Heart right ventricle (tissue), 16 donors: ENCODE measurements at regions of chr7 and their contacts with region 1.

Region 1: GRCh38 chr7:80318081-80318480 is 183.4 kb downstream of the GNAI1 start:
- DNase-seq: no peak
- ATAC-seq: no peak
- H3K4me3 ChIP-seq: no peak overlapping the region
- H3K27ac ChIP-seq: no peak overlapping the region
- H3K4me1 ChIP-seq: no peaks in the 10 kb centered on the region
- H3K27me3 ChIP-seq: no peaks in the 10 kb centered on the region
- CTCF ChIP-seq: no peak

Region 2: GRCh38 chr7:80288175-80289122 is 29.6 kb before region 1 on chr7:
- intact Hi-C with region 1: no loop called
- DNase-seq: no peak
- ATAC-seq: no peak
- H3K4me3 ChIP-seq: no peak overlapping the region
- H3K27ac ChIP-seq: no peak overlapping the region
- H3K4me1 ChIP-seq: peaks cover 0 to 8% (median 0%) of the 10 kb centered on the region in 9 donors
- H3K27me3 ChIP-seq: no peaks in the 10 kb centered on the region
- CTCF ChIP-seq: peak in 7 of 9 donors; percentile 18 to 62 (median 37)

Region 3: GRCh38 chr7:80335511-80336231 is 17.6 kb after region 1 on chr7:
- intact Hi-C with region 1: loop called in 1 of 10 experiments (anchors 2 kb)
- DNase-seq: no peak
- ATAC-seq: peak in 6 of 8 donors; percentile 43 to 82 (median 66)
- H3K4me3 ChIP-seq: no peak overlapping the region
- H3K27ac ChIP-seq: peak overlapping the region in 8 of 10 donors; percentile 7 to 47 (median 29)
- H3K4me1 ChIP-seq: peaks cover 0 to 25% (median 10%) of the 10 kb centered on the region in 9 donors
- H3K27me3 ChIP-seq: no peaks in the 10 kb centered on the region
- CTCF ChIP-seq: no peak